ENCODE measurements at regions of chr13 and their contacts with region 1.

Region 1: GRCh38 chr13:27919934-27920676 is at the start of gene PDX1:
- DNase-seq: peak; percentile 46
- H3K4me3 ChIP-seq: peak within 1 kb of the TSS; percentile 33 to 45 (median 37)
- H3K27ac ChIP-seq: no peak within 1 kb of the TSS
- H3K4me1 ChIP-seq: peaks cover 22% of the 10 kb centered on the region
- H3K27me3 ChIP-seq: peaks cover 69% of the 10 kb centered on the region
- CTCF ChIP-seq: no peak
- total RNA-seq, gene PDX1: not detected

Region 2: DNA sequence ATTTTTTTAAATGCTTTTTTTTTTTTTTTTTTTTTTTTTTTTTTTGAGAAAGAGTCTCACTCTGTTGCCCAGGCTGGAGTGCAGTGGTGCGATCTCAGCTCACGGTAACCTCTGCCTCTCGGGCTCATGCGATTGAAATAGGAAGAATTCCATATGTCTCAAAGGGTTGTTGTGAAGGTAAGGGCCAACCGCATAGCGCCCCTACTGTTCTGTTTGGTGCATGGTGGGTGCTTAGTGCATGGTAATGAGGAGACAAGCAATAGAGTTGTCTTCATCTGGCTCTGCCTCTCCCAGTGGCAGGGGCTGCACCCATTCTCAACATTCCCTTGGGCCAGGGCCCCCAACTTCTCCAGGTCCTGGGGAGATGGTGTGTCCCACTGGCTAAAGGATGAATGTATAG is 580.8 kb before region 1 on chr13:
- CTCF ChIA-PET with region 1: interaction called, 16 read pairs
- dilution Hi-C with region 1: no loop called
- in situ Hi-C with region 1: no loop called
- intact Hi-C with region 1: no loop called
- DNase-seq: peak; percentile 20
- H3K4me3 ChIP-seq: no peak overlapping the region
- H3K27ac ChIP-seq: no peak overlapping the region
- H3K4me1 ChIP-seq: no peaks in the 10 kb centered on the region
- H3K27me3 ChIP-seq: no peaks in the 10 kb centered on the region
- CTCF ChIP-seq: peak; percentile 63 to 64

Region 3: DNA sequence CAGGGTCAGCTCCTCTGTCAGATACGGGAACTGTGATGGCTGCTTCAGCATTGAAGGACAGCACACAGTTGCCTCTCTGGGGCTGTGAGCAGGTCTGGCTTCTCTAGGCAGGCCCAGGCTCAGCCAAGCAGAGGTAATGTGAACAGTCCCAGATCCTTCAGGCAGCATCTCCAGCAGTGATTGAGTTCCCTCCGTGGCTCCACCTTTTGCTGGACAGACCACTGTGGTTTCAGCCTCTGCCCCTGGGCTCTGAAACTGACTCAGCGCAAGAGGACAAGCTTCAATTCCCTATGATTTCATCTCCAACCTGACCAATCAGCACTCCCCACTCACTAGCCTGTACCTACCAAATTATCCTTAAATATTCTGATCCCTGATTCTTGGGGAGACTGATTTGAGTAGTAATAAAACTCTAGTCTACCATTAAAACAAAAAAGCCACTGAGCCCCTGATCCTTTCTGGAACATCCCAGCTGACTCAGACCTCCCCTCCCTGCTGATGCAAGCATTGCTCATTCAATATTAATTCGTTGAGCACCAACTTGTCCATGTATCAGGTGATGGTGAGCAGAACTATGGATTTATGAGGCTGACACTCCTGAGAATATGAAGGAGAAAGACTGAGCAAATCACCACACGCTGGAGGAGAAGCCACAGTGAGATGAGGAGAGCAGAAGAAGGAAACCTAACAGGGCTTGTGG is 111.1 kb before region 1 on chr13:
- CTCF ChIA-PET with region 1: no interaction called
- dilution Hi-C with region 1: no loop called
- in situ Hi-C with region 1: no loop called
- intact Hi-C with region 1: no loop called
- DNase-seq: peak; percentile 94
- H3K4me3 ChIP-seq: no peak overlapping the region
- H3K27ac ChIP-seq: peak overlapping the region; percentile 75
- H3K4me1 ChIP-seq: peaks cover 27% of the 10 kb centered on the region
- H3K27me3 ChIP-seq: no peaks in the 10 kb centered on the region
- CTCF ChIP-seq: no peak

Region 4: DNA sequence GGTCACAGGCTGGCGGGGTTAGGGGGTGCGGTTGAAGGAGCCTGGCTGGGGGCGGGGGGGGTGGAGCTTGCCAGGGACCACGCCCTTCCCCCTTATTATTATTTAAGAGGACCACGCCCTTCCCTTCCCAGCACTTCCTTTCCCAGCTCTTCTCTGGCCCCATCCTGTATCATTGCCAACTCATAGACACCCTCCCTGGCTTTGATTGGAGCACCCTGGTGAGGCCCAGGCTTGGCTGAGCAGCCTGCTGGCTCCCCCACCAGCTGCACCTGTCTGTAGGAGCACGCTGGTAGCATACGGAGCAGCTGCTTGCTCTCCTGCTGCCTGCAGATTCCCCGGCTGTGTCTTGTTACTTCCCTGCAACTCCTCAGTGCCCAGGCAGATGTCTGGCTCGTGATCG is 62.8 kb before region 1 on chr13:
- CTCF ChIA-PET with region 1: no interaction called
- dilution Hi-C with region 1: no loop called
- in situ Hi-C with region 1: no loop called
- intact Hi-C with region 1: no loop called
- DNase-seq: no peak
- H3K4me3 ChIP-seq: no peak overlapping the region
- H3K27ac ChIP-seq: no peak overlapping the region
- H3K4me1 ChIP-seq: no peaks in the 10 kb centered on the region
- H3K27me3 ChIP-seq: peaks cover 20% of the 10 kb centered on the region
- CTCF ChIP-seq: no peak

Region 5: GRCh38 chr13:27960362-27961226 is 40.5 kb after region 1 on chr13:
- CTCF ChIA-PET with region 1: no interaction called
- dilution Hi-C with region 1: loop called (anchors 5 kb)
- in situ Hi-C with region 1: no loop called
- intact Hi-C with region 1: no loop called
- DNase-seq: peak; percentile 50
- H3K4me3 ChIP-seq: peak overlapping the region; percentile 38 to 46 (median 45)
- H3K27ac ChIP-seq: no peak overlapping the region
- H3K4me1 ChIP-seq: peaks cover 11% of the 10 kb centered on the region
- H3K27me3 ChIP-seq: peaks cover 19% of the 10 kb centered on the region
- CTCF ChIP-seq: peak; percentile 32 to 63

Measured in mammary epithelial cell (primary cell).